ENCODE measurements at regions of chr17 and their contacts with region 1.

Region 1: GRCh38 chr17:1629647-1630310 is 1.1 kb upstream of the SLC43A2 start:
- DNase-seq: peak; percentile 68 to 76 (median 74)
- ATAC-seq: peak; percentile 18
- H3K4me3 ChIP-seq: peak overlapping the region; percentile 48 to 55
- H3K27ac ChIP-seq: peak overlapping the region; percentile 82 to 93 (median 87)
- H3K4me1 ChIP-seq: peaks cover 20% of the 10 kb centered on the region
- H3K27me3 ChIP-seq: no peaks in the 10 kb centered on the region
- CTCF ChIP-seq: peak; percentile 44 to 88 (median 67)
- POLR2A ChIP-seq: no peak

Region 2: DNA sequence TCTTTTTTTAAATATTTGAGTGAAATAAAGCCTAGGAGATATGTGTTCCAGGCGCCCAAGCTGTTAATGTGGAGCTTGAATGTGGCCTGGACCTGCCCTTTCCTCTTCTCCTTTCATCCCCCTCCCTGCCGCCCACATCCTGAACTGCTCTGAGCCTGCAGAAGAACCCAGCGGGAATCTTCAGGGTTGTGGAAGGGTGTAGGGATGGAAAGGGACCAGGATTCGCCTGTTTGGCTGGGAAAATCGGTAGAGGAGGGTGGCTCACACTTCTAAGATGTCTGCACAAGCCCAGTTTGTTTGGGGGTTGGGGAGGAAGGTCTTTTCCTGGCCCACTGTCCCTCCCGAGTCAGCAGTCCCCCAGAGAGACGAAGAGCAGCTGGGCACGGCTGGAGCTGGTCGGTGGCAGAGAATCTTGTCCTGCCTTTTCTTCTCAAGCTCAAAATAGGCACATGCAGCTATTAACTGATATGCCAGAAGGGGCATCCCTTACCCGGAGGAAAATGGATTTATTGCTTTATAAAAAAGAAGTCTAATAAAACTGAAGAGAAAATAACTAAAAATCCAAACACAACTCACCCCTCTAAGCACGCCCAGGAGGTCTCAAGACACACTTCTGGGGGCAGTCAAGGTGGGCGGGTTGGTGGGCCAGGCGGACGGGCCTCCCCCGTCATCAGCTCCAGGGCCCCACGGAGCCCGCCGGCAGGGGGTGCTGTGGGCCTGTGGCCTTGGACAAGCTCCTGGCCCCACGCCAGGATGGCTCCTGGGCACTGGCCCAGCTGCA is 55.7 kb before region 1 on chr17:
- intact Hi-C with region 1: loop called (anchors 5 kb)
- DNase-seq: peak; percentile 82 to 94 (median 90)
- ATAC-seq: peak; percentile 77
- H3K4me3 ChIP-seq: no peak overlapping the region
- H3K27ac ChIP-seq: peak overlapping the region; percentile 65 to 83 (median 70)
- H3K4me1 ChIP-seq: peaks cover 42% of the 10 kb centered on the region
- H3K27me3 ChIP-seq: no peaks in the 10 kb centered on the region
- CTCF ChIP-seq: peak; percentile 94 to 98 (median 95)
- POLR2A ChIP-seq: no peak

Region 3: DNA sequence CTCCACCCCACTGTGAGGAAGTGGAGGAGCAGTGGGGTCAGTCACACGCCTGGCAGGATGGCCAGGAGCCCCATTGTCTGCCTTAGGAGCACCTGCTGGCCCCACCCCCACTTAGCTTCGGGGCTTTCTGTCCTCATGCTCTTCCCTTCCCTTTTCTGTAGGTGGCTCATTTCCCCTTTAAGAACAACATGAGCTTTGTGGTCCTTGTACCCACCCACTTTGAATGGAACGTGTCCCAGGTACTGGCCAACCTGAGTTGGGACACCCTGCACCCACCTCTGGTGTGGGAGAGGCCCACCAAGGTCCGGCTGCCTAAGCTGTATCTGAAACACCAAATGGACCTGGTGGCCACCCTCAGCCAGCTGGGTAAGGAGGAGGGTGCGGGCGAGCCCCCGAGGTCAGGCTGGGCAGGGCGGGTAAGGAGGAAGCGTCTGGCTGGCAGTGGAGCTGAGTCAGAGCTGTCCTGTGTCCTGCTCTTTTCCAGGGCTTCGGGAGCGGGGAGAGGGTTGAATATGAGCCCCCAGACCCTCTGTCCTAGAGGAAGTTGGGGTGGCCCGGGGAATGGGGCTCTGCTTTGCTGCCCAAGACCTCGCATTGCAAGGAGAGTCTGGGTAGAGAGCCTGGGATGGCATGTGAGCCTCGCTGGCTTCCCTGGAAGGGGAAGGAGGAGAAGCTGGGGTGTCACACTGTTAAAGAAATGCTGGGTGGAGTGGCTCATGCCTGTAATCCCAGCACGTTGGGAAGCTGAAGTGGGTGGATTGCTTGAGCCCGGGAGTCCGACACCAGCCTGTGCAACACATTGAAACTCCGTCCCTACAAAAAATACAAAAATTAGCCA is 122.9 kb after region 1 on chr17:
- intact Hi-C with region 1: no loop called
- DNase-seq: peak in 3 of 4 donors; percentile 65 to 73 (median 66)
- ATAC-seq: peak; percentile 72
- H3K4me3 ChIP-seq: no peak overlapping the region
- H3K27ac ChIP-seq: peak overlapping the region in 3 of 4 donors; percentile 62 to 79 (median 78)
- H3K4me1 ChIP-seq: peaks cover 20% of the 10 kb centered on the region
- H3K27me3 ChIP-seq: no peaks in the 10 kb centered on the region
- CTCF ChIP-seq: peak in 1 of 7 experiments; percentile 3
- POLR2A ChIP-seq: peak in 2 of 3 donors; percentile 51 to 56

Measured in body of pancreas (tissue), 4 donors.